A673 (cell line): ENCODE measurements at regions of chr9 and their contacts with region 1.

Region 1: DNA sequence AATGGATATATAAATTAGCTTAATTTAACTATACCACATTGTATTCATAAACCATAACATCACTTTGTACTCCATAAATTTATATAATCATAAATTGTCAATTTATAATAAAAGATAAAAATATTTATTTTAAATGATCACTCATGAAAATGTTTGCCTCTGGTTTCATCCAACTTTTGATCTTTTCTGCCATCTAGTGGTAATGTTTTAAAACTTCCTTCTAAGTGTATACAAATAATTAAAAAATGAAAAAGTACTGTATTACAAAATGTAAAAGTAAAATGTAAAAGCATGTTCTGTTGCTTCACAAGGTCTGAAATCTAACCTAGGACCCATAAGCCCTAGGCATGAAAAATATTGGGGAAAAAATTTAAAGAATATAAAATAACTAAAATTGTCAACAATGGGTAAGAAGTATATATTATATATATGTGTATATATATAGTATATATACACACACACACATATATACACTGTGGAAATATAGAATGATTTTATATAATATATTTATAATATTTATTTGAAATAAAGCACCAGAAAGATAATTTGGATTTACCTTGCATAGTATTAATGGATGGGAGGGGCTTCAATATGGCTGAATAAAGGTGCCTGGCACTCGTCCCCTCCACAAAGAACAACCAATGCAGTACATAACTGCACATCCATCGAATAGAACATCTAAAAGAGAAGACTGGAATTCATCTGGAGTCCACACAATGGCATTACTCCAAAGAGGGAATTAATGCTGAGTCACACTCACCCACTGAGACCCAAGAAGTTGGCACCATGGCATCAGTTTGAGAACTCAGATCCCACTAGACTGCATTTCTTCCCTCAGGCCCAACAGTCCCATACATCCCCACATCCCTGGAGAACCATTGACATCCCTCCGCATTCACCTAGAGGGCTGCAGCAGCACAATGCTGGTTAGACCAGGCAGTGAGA is 32.5 kb downstream of the ANXA1 start:
- DNase-seq: peak; percentile 74
- H3K4me3 ChIP-seq: no peak overlapping the region
- H3K27ac ChIP-seq: no peak overlapping the region
- H3K4me1 ChIP-seq: peaks cover 49% of the 10 kb centered on the region
- H3K27me3 ChIP-seq: no peaks in the 10 kb centered on the region
- CTCF ChIP-seq: peak; percentile 66

Region 2: DNA sequence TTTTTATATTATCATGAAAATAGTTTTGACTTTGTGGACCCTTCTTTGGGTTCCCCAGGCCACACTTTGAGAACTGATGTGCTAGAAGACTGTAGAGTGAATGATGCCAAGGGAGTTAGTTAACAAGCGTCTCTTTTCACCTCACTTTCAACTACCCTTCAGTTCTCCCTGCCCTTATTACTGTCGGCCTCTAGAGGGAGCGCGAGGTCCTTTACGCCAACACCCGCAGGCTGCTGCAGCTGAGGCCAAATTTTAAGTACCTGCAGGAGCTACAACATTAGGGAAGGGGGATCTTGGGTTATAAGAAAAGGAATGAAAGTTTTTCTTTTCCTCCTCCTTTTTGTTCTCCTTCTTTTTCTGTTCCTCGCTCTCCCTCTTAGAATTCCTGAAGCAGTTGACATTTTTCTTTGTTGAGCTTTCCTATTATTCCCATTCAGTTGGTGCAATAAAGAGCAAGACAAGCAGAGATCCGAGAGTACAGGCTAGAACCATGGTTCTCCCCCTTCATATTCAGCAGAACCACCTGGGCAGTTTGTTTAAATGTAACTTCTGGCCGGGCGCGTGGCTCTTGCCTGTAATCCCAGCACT is 903.2 kb before region 1 on chr9:
- CTCF ChIA-PET with region 1: no interaction called
- POLR2A ChIA-PET with region 1: no interaction called
- intact Hi-C with region 1: loop called (anchors 10 kb)
- DNase-seq: peak; percentile 72
- H3K4me3 ChIP-seq: no peak overlapping the region
- H3K27ac ChIP-seq: no peak overlapping the region
- H3K4me1 ChIP-seq: no peaks in the 10 kb centered on the region
- H3K27me3 ChIP-seq: no peaks in the 10 kb centered on the region
- CTCF ChIP-seq: peak; percentile 92

Region 3: GRCh38 chr9:72807765-72808445 is 376.3 kb before region 1 on chr9:
- CTCF ChIA-PET with region 1: no interaction called
- POLR2A ChIA-PET with region 1: no interaction called
- intact Hi-C with region 1: no loop called
- DNase-seq: peak; percentile 15
- H3K4me3 ChIP-seq: no peak overlapping the region
- H3K27ac ChIP-seq: no peak overlapping the region
- H3K4me1 ChIP-seq: no peaks in the 10 kb centered on the region
- H3K27me3 ChIP-seq: no peaks in the 10 kb centered on the region
- CTCF ChIP-seq: peak; percentile 60

Region 4: DNA sequence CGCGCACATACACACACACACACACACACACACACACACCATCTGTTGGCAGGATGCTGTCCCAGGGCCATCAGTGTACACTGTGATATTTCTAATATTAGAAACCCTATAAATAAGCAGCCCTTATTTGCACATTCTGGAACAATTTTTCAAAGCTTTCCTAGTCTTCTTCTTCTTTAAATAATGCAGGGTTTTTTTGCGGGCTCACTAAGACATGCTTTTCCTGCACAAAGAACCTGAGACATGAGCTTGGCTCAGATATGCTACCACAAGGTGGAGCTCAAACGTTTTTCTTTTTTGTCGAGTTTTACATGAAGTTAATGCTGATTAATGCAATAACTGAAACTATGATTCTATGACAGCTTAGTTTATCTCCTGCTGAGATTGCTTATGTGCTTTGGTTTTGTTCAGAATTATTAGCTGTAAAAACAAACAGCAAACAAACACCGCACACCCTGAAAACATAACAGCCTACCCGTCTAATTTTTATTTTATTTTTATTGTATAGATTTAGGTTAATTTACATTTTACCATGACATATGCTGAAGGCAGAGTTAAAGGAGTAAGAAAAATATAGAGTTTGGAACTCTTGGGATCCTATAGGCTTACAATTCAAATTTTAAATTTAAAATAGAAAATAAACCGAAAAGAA is 327.1 kb before region 1 on chr9:
- CTCF ChIA-PET with region 1: no interaction called
- POLR2A ChIA-PET with region 1: no interaction called
- intact Hi-C with region 1: loop called (anchors 2 kb)
- DNase-seq: peak; percentile 84
- H3K4me3 ChIP-seq: no peak overlapping the region
- H3K27ac ChIP-seq: no peak overlapping the region
- H3K4me1 ChIP-seq: peaks cover 17% of the 10 kb centered on the region
- H3K27me3 ChIP-seq: no peaks in the 10 kb centered on the region
- CTCF ChIP-seq: peak; percentile 80

Region 5: GRCh38 chr9:73023025-73023541 is 161.1 kb before region 1 on chr9:
- CTCF ChIA-PET with region 1: no interaction called
- POLR2A ChIA-PET with region 1: no interaction called
- intact Hi-C with region 1: loop called (anchors 5 kb)
- DNase-seq: peak; percentile 87
- H3K4me3 ChIP-seq: peak overlapping the region; percentile 12
- H3K27ac ChIP-seq: peak overlapping the region; percentile 14
- H3K4me1 ChIP-seq: peaks cover 11% of the 10 kb centered on the region
- H3K27me3 ChIP-seq: no peaks in the 10 kb centered on the region
- CTCF ChIP-seq: peak; percentile 93

Region 6: DNA sequence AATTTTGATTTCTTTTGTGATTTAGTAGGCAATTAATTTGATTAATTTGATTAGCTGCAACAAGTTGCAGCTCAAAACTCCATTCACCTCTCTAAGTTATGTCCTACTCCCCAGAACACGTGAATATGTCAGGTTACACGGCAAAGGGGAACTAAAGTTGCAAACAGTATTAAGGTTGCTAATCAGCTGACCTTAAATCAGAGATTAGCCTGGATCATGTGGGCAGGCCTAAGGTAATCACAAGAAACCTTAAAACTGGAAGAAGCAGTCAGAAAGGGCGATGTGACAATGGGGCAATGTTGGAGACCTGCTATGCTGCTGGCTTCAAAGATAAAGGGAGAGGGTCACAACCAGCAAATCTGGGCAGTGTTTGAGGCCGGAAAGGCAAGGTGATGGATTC is 79.8 kb before region 1 on chr9:
- CTCF ChIA-PET with region 1: interaction called, 14 read pairs
- POLR2A ChIA-PET with region 1: no interaction called
- intact Hi-C with region 1: loop called (anchors 1 kb)
- DNase-seq: no peak
- H3K4me3 ChIP-seq: no peak overlapping the region
- H3K27ac ChIP-seq: no peak overlapping the region
- H3K4me1 ChIP-seq: no peaks in the 10 kb centered on the region
- H3K27me3 ChIP-seq: no peaks in the 10 kb centered on the region
- CTCF ChIP-seq: no peak